CD14-positive monocyte (primary cell): ENCODE measurements at regions of chr17 and their contacts with region 1.

Region 1: DNA sequence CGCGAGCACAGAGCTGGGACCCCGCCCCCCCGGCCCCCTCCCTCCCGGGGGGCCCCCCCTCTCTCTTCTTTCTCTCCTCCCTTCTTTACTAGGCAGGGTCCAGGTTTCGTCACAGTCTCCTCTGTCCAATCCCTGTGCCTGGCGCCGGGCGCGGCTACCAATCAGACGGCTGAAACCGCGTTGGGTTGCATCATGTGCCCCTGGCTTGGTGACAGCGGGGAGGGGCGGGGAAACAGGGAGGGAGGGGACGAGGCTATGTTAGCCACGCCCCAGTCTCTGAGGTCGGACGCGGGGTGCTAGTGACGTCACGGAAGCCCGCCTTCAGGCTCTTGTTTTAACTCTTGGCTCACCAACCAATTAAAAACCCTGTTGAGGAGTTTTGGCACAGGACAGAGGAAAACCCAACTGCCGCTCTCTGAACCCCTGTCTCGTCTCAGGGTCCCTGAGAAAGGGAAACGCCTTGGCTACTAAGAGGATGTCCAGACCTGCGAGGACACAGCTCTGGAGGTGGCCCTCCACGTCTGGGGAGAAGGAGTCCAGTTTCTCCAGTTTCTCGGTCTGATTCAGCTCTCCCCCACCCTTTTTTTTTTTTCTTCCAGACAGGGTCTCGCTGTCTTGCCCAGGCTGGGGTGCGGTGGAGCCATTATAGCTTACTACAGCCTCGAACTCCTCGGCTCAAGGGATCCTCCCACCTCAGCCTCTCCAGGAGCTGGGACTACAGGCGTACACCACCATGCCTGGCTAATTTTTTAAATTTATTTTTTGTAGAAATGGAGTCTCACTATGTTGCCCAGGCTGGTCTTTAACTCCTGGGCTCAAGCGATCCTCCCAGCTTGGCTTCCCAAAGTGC is 439 bp upstream of the PLEKHH3 start:
- DNase-seq: peak; percentile 99 to 100 (median 99)
- H3K4me3 ChIP-seq: peak overlapping the region; percentile 52 to 75 (median 66)
- H3K4me3 Mint-ChIP-seq: peak overlapping the region; percentile 74 to 83
- H3K27ac ChIP-seq: peak overlapping the region; percentile 57 to 89
- H3K27ac Mint-ChIP-seq: peak overlapping the region; percentile 82 to 94 (median 91)
- H3K4me1 ChIP-seq: peaks cover 73 to 81% of the 10 kb centered on the region in 2 donors
- H3K4me1 Mint-ChIP-seq: peaks cover 61% of the 10 kb centered on the region
- H3K27me3 ChIP-seq: peaks cover 33 to 55% of the 10 kb centered on the region in 2 donors
- H3K27me3 Mint-ChIP-seq: peaks cover 43 to 68% (median 62%) of the 10 kb centered on the region in 3 donors
- CTCF ChIP-seq: no peak

Region 2: DNA sequence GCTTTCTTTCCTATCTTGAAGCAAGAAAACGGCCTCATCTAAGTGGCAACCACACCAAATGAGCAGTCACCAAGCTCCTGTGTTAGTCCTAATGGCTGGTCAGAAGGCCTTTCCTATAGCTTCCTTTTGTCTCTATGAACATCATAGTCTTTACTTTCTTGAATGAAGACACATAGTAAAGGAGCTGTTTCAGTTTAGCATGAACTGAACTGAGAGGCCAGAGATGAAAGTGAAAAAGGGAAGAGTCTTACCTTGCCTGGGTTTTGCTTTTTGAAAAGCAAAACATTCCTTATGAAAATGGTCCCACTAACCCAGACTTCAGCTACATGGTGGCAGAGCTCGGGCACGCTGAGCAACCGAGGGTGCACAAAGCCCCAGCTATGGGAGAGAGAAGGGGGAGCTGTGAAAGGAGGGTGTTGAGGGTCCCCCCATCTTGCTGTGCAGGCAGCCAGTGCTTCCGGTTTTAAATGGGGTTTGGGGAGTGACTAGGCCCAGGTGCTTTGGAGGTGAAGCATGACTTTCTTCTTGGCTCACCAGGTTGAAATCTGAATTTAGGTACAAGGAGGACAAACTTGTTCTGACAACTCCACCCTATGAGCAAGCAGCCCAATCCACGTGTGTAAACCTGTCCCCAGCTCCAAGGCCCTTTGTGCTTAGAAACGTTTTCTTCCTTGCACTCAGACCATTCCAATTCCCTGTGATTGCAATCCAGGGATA is 90.6 kb before region 1 on chr17:
- intact Hi-C with region 1: no loop called
- DNase-seq: no peak
- H3K4me3 ChIP-seq: no peak overlapping the region
- H3K4me3 Mint-ChIP-seq: no peak overlapping the region
- H3K27ac ChIP-seq: peak overlapping the region in 1 of 2 donors; percentile 74
- H3K27ac Mint-ChIP-seq: peak overlapping the region in 4 of 7 donors; percentile 11 to 76 (median 60)
- H3K4me1 ChIP-seq: peaks cover 16 to 19% of the 10 kb centered on the region in 2 donors
- H3K4me1 Mint-ChIP-seq: peaks cover 25% of the 10 kb centered on the region
- H3K27me3 ChIP-seq: no peaks in the 10 kb centered on the region
- H3K27me3 Mint-ChIP-seq: peaks cover 0 to 3% (median 0%) of the 10 kb centered on the region in 3 donors
- CTCF ChIP-seq: no peak

Region 3: DNA sequence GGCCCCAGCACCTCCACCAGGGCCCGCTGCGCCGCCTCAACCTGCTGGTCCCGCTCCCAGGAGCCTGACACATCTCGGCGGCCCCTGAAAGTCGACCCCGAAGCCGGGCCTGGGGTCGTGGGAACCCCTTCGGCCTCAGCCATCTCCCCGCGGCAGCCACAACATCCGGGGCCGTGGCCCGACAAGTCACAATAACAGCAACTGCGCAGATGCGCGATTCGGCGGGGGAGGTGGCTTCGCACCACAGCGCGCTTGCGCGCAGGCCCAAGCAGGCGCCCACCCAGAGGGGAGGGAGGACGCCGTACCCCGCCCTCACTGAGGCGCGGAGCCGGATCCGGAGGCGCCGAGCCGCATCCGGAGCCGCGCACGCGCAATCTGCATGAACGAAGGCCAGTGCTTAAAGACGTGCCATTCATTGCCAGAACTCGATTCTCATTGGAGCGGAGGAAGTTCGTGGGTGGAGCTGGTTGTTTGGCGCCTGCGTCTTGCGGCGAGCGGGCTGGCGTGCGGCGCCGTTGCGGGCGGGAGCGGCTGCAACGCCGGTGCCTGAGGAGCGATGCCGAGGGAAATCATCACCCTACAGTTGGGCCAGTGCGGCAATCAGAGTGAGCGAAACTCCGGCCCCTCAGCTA is 67.9 kb before region 1 on chr17 and contains the starts of genes RETREG3 and TUBG1:
- intact Hi-C with region 1: loop called in 1 of 2 experiments (anchors 2 kb)
- DNase-seq: peak; percentile 99 to 100 (median 99)
- H3K4me3 ChIP-seq: peak within 1 kb of the TSS; percentile 80 to 98 (median 92)
- H3K4me3 Mint-ChIP-seq: peak within 1 kb of the TSS; percentile 100
- H3K27ac ChIP-seq: peak within 1 kb of the TSS; percentile 72 to 90
- H3K27ac Mint-ChIP-seq: peak within 1 kb of the TSS; percentile 84 to 96 (median 95)
- H3K4me1 ChIP-seq: peaks cover 21 to 32% of the 10 kb centered on the region in 2 donors
- H3K4me1 Mint-ChIP-seq: peaks cover 31% of the 10 kb centered on the region
- H3K27me3 ChIP-seq: no peaks in the 10 kb centered on the region
- H3K27me3 Mint-ChIP-seq: peaks cover 0 to 3% (median 0%) of the 10 kb centered on the region in 3 donors
- CTCF ChIP-seq: peak; percentile 20
- polyA plus RNA-seq, gene RETREG3: 34.0 to 69.9 (median 69.9) TPM
- polyA plus RNA-seq, gene TUBG1: 7.5 to 17.4 (median 10.2) TPM